Activated CD8-positive, alpha-beta T cell treated with anti-CD3 and anti-CD28 coated beads for 36 hours (primary cell): ENCODE measurements at regions of chr11 and their contacts with region 1.

Region 1: GRCh38 chr11:65779851-65780577 is 762 bp downstream of the AP5B1 start:
- DNase-seq: peak; percentile 91
- ATAC-seq: peak; percentile 85
- H3K4me3 Mint-ChIP-seq: peak overlapping the region; percentile 89
- H3K27ac Mint-ChIP-seq: peak overlapping the region; percentile 89
- H3K4me1 Mint-ChIP-seq: peaks cover 24% of the 10 kb centered on the region
- H3K27me3 Mint-ChIP-seq: peaks cover 5% of the 10 kb centered on the region
- CTCF ChIP-seq: peak; percentile 100

Region 2: GRCh38 chr11:65720237-65720934 is 59.6 kb before region 1 on chr11 and contains the start of gene RNASEH2C:
- CTCF ChIA-PET with region 1: interaction called, 27 read pairs
- POLR2A ChIA-PET with region 1: interaction called, 9 read pairs
- intact Hi-C with region 1: no loop called
- DNase-seq: peak; percentile 91
- ATAC-seq: peak; percentile 94
- H3K4me3 Mint-ChIP-seq: peak within 1 kb of the TSS; percentile 88
- H3K27ac Mint-ChIP-seq: peak within 1 kb of the TSS; percentile 96
- H3K4me1 Mint-ChIP-seq: peaks cover 22% of the 10 kb centered on the region
- H3K27me3 Mint-ChIP-seq: no peaks in the 10 kb centered on the region
- CTCF ChIP-seq: no peak
- total RNA-seq, gene RNASEH2C: 101 to 109 TPM

Region 3: GRCh38 chr11:65766535-65766934 is 13.5 kb before region 1 on chr11:
- CTCF ChIA-PET with region 1: interaction called, 54 read pairs
- POLR2A ChIA-PET with region 1: interaction called, 3 read pairs
- intact Hi-C with region 1: no loop called
- DNase-seq: no peak
- ATAC-seq: no peak
- H3K4me3 Mint-ChIP-seq: no peak overlapping the region
- H3K27ac Mint-ChIP-seq: no peak overlapping the region
- H3K4me1 Mint-ChIP-seq: peaks cover 4% of the 10 kb centered on the region
- H3K27me3 Mint-ChIP-seq: no peaks in the 10 kb centered on the region
- CTCF ChIP-seq: no peak

Region 4: GRCh38 chr11:65810046-65810868 is 30.2 kb after region 1 on chr11:
- CTCF ChIA-PET with region 1: interaction called, 235 read pairs
- POLR2A ChIA-PET with region 1: interaction called, 3 read pairs
- intact Hi-C with region 1: no loop called
- DNase-seq: no peak
- ATAC-seq: peak; percentile 86
- H3K4me3 Mint-ChIP-seq: no peak overlapping the region
- H3K27ac Mint-ChIP-seq: peak overlapping the region; percentile 46
- H3K4me1 Mint-ChIP-seq: peaks cover 4% of the 10 kb centered on the region
- H3K27me3 Mint-ChIP-seq: peaks cover 7% of the 10 kb centered on the region
- CTCF ChIP-seq: no peak

Region 5: DNA sequence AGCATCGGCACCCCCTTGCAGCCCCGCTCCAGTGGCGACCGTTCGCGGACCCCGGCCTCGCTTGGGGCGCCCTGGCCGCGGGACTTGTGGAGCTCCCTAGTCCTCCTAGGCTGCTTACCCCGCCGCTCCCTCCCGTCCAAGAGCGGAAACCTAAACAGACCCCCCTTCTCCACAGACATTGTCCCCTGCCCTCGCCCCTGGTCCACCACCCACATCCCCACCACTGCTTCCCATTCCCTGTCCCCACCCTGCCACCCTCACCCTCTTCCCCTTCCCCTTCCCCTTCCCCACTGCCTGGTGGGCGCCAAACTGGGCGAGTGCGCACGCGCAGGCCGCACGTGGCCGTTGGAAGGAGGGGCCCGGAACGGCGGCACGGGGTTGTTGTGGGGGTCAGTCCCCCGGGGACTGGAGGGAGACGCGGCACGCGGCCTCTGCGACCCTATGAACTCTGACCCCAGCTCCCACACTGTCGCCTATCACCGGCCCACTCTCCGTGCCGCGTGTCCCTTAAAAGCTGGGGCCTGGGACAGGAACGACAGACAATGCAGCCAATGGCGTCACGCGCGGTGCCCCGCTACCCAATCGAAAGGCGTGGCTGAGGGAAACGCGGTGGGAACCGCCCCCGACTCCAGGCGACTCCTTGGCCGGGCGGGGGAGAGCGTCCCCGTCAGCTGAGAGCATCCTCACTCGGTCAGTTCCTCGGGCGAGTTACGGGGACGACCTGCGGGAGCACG is 53.5 kb after region 1 on chr11 and contains the start of gene SNX32:
- CTCF ChIA-PET with region 1: interaction called, 34 read pairs
- POLR2A ChIA-PET with region 1: no interaction called
- intact Hi-C with region 1: no loop called
- DNase-seq: peak; percentile 98
- ATAC-seq: peak; percentile 100
- H3K4me3 Mint-ChIP-seq: no peak within 1 kb of the TSS
- H3K27ac Mint-ChIP-seq: no peak within 1 kb of the TSS
- H3K4me1 Mint-ChIP-seq: peaks cover 28% of the 10 kb centered on the region
- H3K27me3 Mint-ChIP-seq: peaks cover 2% of the 10 kb centered on the region
- CTCF ChIP-seq: no peak
- total RNA-seq, gene SNX32: 1.6 to 2.1 TPM

Region 6: GRCh38 chr11:65873318-65874156 is 93.5 kb after region 1 on chr11:
- CTCF ChIA-PET with region 1: no interaction called
- POLR2A ChIA-PET with region 1: no interaction called
- intact Hi-C with region 1: no loop called
- DNase-seq: peak; percentile 97
- ATAC-seq: peak; percentile 97
- H3K4me3 Mint-ChIP-seq: peak overlapping the region; percentile 84
- H3K27ac Mint-ChIP-seq: peak overlapping the region; percentile 81
- H3K4me1 Mint-ChIP-seq: peaks cover 49% of the 10 kb centered on the region
- H3K27me3 Mint-ChIP-seq: no peaks in the 10 kb centered on the region
- CTCF ChIP-seq: no peak

Region 7: DNA sequence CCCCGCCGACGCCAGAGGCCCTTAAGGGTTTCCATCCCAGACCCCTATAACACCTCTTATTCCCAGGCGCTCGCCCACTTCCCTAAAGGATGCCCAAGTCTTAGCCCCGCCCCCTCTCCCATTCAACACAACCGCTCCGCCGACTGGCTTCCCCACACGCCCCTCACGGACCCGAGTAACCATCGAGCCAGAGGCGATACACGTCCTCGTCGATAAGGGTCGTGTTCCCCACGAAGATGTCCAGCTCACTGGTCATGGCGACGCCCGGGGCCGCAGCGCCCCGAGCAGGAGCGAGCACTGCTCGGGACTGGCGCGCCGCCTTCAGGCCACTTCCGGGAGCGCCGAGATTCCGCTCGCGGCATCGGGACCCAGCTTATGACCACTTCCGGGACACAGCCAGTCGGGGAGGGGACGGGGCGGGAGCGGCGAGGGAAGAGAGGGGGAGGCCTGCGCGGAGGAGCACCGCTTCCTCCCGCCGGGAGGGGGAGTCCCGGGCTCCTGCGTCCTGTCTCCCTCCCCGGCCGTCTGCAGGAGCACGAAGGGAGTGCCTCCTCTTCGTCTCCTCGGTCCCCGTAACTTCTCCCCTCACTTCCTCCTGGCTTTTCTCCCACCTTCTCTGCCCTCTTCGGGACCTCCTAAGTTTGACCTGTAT is 108.3 kb after region 1 on chr11 and contains the start of gene FIBP:
- CTCF ChIA-PET with region 1: interaction called, 41 read pairs
- POLR2A ChIA-PET with region 1: interaction called, 4 read pairs
- intact Hi-C with region 1: no loop called
- DNase-seq: peak; percentile 98
- ATAC-seq: peak; percentile 68
- H3K4me3 Mint-ChIP-seq: peak within 1 kb of the TSS; percentile 94
- H3K27ac Mint-ChIP-seq: peak within 1 kb of the TSS; percentile 91
- H3K4me1 Mint-ChIP-seq: peaks cover 51% of the 10 kb centered on the region
- H3K27me3 Mint-ChIP-seq: no peaks in the 10 kb centered on the region
- CTCF ChIP-seq: peak; percentile 75
- total RNA-seq, gene FIBP: 78.8 to 79.9 TPM